GM10248 (cell line): ENCODE measurements at regions of chr7 and their contacts with region 1.

Region 1: DNA sequence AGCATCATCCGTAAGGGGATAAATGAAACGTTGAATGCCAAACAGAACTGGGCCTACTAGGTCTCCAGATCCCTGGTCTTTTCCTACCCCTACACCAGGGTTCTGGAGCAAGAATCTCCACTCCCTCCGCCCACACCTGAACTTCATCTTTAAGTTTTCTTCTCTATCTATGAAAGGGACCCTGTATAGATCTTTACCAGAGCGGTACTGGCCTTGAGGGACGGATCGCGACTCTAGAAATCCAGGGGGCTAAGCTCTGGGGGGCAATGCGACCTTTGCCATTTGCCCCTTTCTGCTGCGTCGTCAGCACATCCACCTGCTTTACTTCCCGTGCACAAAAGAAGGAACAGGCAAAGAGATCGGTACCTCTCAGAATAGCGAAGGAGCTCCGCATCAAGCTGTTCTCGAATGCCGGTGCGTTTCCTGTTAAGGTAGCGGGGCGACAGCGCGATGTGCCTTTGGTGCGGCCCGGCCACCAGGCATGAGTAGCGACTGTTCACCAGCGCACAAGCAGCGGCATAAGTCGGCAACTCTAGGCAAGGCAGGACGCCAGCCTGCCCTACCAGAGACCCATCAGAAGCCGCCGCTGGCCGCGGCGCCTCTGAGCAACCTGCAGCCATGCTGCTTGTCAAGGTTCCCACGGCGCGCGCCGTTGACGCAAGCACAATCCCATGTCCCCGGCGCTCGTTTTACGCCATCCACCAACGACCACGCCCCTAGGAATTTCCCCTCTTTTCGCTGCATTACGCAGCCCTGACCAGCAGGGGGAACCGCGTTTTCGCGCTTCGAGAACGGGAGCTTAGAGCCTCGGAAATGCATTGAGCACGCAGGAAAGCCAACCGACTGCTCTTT is at the start of gene POLR1F:
- DNase-seq: peak; percentile 91
- CTCF ChIP-seq: peak; percentile 95

Region 2: GRCh38 chr7:19698331-19698730 is 10.3 kb before region 1 on chr7:
- CTCF ChIA-PET with region 1: interaction called, 28 read pairs
- POLR2A ChIA-PET with region 1: no interaction called
- DNase-seq: no peak
- CTCF ChIP-seq: no peak

Region 3: DNA sequence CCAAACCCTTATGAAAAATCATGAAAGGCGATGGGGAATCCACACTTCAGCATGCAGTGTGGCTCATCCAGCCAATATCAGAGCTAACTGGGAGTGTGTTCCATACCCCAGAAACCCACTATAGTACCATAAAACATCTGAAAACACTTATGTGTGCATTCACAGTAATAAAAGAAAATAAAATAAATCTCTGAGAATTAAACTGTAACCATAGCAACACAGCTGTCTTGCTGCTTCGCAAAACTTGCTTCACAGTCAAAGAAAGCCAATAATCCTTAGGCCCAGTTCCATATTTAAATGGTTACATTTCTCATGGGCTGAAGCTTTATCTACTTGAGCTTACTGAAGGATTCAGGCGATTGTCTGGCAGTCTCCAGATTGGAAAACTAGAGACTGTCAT is 20.1 kb after region 1 on chr7:
- CTCF ChIA-PET with region 1: interaction called, 17 read pairs
- POLR2A ChIA-PET with region 1: interaction called, 3 read pairs
- DNase-seq: no peak
- CTCF ChIP-seq: no peak

Region 4: GRCh38 chr7:19747740-19748339 is 39.2 kb after region 1 on chr7:
- CTCF ChIA-PET with region 1: interaction called, 32 read pairs
- POLR2A ChIA-PET with region 1: no interaction called
- DNase-seq: peak; percentile 40
- CTCF ChIP-seq: peak; percentile 42

Region 5: GRCh38 chr7:20598459-20599309 is 890.1 kb after region 1 on chr7:
- CTCF ChIA-PET with region 1: interaction called, 248 read pairs
- POLR2A ChIA-PET with region 1: no interaction called
- DNase-seq: peak; percentile 50
- CTCF ChIP-seq: peak; percentile 84